Activated naive CD4-positive, alpha-beta T cell treated with anti-CD3 and anti-CD28 coated beads for 36 hours (primary cell): ENCODE measurements at regions of chr13 and their contacts with region 1.

Region 1: DNA sequence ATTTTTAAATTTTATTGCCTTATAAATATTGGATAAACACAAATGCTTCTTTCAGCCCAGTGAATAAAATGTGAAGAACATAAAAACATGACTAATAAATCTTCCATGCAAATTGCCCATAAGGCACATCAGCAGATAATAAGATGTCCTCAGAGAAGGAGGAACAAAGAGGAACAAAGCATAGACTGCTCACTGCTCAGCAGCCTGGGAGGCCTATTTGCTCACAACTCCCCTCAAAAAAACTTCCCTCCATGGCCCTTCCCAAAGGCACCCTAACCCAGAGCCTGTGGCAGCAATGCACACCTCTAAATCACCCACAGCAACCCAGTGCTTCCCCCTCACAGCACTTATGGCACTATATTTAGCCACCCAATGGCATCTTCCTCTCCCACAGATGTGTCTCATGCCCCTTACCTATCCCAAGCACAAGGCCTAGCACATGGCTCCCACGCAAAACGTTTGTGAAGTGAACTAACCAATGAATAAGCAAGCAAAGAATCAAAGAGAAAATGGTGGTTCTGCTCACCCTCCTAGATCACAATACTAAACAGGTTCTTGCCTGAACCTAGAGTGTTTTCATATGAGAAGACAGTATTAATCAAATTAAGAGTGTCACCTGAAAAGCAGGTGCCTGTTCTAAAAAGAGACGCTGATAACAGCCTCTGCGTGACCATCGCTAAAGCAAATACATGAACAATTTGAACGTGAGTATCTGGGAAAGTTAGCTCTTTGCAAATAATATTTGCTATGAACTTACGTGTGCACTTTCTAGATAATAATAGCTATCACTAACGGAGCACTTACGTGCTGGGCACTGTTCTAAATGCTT is 96.9 kb downstream of the TBC1D4 start:
- DNase-seq: no peak
- H3K4me3 Mint-ChIP-seq: no peak overlapping the region
- H3K27ac Mint-ChIP-seq: no peak overlapping the region
- H3K4me1 Mint-ChIP-seq: peaks cover 13% of the 10 kb centered on the region
- H3K27me3 Mint-ChIP-seq: no peaks in the 10 kb centered on the region

Region 2: GRCh38 chr13:75365724-75366173 is 19.3 kb before region 1 on chr13:
- CTCF ChIA-PET with region 1: interaction called, 5 read pairs
- intact Hi-C with region 1: loop called (anchors 2 kb)
- DNase-seq: peak; percentile 40
- H3K4me3 Mint-ChIP-seq: peak overlapping the region; percentile 4
- H3K27ac Mint-ChIP-seq: peak overlapping the region; percentile 77
- H3K4me1 Mint-ChIP-seq: peaks cover 35% of the 10 kb centered on the region
- H3K27me3 Mint-ChIP-seq: peaks cover 4% of the 10 kb centered on the region